RWPE1 (cell line): ENCODE measurements at regions of chr5 and their contacts with region 1.

Region 1: DNA sequence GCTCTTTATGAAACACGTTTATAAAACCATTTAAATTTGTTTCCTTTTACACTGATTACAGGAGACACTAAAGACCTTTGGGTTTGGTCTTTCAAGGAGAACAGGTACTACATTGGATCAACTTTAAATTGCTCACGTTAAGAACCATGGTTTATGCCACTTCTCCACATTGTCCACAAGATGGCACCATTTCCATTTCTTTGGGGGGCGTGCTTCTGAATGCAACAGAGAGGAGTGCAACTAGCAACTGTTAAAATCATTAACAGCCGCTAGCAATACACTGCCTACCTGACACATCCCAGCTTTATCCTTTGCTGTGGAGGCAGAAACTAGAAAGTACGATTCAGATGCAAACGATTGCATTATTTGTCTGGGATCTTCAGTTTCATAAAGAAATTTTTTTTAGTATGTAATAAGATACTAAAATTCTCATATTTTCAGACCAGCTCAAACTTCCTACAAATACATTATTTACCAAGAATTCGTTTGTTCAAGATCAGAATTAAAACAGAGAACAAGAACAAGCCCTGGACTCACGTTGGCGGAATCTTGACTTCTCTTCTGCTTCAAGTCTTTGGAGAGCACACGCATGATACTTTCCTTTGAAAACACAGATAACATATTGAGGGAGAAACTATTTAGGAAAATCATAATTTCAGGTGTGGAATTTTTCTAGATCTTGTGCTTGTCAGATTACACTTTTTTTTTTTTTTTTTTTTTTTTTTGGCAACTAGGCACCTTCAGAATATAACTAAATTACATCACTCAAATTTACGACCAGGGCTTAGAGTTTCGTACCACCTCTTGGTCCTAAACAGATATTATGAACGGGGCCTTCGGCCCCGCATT is 702 bp downstream of the CDC20B start:
- DNase-seq: peak; percentile 93
- H3K27ac ChIP-seq: no peak overlapping the region
- CTCF ChIP-seq: peak; percentile 90

Region 2: DNA sequence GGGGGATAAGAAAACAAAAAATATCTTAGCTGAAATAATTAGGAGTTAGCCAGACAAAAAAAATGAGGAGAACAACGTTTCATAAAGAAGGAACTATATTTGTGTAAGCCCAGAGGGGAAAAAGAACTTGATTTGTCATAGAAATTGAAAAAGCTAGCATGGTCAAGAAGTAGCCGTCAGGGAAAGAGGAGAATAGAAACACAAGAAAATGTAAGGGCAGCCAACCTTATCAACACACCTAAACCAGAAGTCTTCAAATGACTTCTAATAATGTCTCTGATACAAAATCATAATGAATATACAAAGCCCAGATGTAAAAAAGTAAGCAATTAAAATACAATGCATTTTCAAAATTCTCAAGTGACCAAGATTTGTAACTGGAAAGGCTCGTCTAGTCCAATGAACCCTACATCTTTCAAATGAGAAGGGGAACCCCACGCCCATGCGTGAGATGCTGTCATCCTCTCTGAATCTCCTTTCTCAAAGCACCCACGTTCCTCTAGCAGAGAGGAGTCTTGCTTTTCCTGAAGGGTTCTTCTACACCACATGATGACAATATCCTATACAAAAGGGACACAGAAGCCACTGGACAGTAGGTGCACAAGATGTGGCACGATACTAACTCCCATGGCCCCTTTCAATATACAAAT is 965.6 kb before region 1 on chr5:
- CTCF ChIA-PET with region 1: no interaction called
- POLR2A ChIA-PET with region 1: no interaction called
- DNase-seq: no peak
- H3K27ac ChIP-seq: no peak overlapping the region
- CTCF ChIP-seq: no peak

Region 3: DNA sequence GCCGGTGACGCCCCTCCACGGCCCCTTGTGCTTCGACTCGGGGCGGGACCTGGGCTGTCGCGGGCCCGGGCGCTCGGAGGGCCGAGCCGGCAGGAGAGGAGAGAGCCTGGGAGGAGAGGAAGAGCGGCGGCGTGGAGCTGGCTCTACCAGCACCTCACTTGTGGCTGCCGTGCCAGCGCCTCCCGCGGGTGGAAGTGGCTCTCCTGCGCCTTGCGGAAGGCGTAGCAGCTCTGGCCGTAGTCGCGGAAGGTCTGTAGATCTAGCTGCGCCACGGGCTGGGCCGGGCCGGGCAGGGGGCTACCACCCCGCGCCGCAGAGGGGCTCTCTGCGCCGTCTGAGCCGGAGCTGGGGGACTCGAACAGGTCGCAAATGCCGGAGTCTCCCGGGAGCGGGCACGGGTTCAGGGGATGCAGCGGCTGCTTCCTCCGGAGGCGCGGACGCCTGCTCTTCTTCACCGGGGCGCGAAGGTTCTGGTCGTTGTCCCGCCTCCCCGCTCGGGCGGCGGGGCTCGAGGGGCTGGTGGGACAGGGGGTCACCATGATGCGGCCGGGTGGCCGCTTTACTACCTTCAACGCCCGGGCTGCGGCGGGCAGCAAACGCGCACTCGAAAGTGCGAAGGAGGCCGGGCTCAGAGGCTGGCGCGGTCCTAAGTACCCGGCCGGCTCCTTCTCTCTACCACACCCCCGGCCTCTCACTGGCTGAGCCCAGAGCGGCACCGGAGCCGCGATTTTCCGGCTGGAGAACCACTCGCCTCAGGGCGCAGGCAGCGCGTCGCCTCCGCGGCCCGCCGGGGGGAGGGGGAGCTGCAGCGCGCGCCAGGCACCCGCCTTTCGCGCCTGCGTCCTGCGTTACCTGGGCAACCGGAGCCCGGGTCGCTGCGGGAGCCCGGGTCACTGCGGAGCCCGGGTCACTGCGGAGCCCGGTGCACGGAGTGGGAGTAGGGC is 61.0 kb after region 1 on chr5 and contains the start of gene CCNO:
- CTCF ChIA-PET with region 1: interaction called, 16 read pairs
- POLR2A ChIA-PET with region 1: interaction called, 4 read pairs
- DNase-seq: peak; percentile 90
- H3K27ac ChIP-seq: peak within 1 kb of the TSS; percentile 91
- CTCF ChIP-seq: peak; percentile 36